A549 (cell line): ENCODE measurements at regions of chr2 and their contacts with region 1.

Region 1: DNA sequence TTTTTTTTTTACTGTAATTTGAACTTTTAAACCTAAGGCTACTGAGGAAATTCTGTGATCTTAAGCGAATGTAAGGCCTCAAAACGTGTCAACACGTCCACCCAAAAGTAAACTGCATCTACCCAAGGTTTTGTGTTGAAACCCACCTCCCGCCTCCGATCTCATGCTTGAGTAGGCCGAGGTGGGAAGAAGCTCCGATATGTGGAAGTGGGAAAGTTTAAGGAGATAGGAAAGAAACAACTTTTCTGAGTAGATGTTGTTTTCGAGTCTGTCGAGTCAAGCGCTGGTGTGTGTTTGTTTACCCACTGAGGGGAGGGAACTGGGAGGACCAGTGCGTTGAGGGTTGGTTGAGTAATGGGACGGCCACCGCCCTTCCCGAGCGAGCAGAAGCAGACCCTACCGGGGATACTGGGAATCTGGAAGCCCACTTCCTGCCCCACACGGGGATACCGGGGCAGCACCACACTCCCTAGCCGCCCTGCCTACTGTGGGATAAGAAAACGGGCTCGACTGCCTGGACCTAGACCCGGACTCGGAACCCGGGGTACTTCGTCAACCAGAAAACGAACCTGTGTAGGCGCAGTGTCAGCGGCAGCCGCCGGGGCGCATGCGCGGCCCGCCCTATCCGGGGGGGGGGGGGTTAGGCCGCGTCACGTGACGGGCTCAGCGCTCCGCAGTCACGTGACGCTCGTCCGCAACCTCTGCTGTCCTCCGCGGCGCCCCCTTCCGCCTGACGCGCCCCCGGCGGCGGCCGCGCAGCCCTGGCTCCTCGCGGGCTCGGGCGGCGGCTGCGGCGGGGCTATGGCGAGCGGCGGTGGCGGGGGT is at the start of gene RETREG2:
- DNase-seq: peak; percentile 87 to 94
- ATAC-seq: peak; percentile 83 to 88
- H3K4me3 ChIP-seq: peak within 1 kb of the TSS; percentile 84
- H3K27ac ChIP-seq: peak within 1 kb of the TSS; percentile 83 to 96
- H3K4me1 ChIP-seq: peaks cover 15% of the 10 kb centered on the region
- CTCF ChIP-seq: peak; percentile 54
- EP300 ChIP-seq: no peak
- POLR2A ChIP-seq: peak; percentile 69; the same call in 1 of the 2 replicates
- RAD21 ChIP-seq: no peak
- polyA plus RNA-seq, gene RETREG2: 67.5 and 83.2 TPM in 2 replicates

Region 2: DNA sequence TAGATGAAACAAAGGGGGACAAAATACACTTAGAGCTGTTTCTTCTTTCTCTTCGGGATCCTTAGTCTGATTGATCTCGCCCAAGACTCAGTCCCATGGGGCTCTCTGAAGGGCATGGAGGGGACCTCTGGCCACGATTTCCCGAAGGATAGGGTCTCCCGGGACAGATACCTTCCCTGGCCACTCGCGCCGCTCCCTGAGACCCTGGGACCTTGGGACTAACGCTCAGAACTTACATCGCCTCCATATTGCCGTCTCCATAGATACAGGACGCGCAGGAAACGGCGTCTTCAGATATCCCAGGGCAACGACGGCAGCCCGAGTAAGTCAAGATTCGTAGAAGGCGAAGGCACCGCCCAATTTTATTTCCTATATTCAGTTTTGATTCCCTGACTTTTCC is 136.5 kb before region 1 on chr2 and contains the start of gene CFAP65:
- CTCF ChIA-PET with region 1: no interaction called
- POLR2A ChIA-PET with region 1: no interaction called
- DNase-seq: peak; percentile 53 to 68
- ATAC-seq: peak; percentile 75 to 85
- H3K4me3 ChIP-seq: peak within 1 kb of the TSS; percentile 49
- H3K27ac ChIP-seq: no peak within 1 kb of the TSS
- H3K4me1 ChIP-seq: peaks cover 3% of the 10 kb centered on the region; the same call in 1 of the 3 replicates
- CTCF ChIP-seq: no peak
- EP300 ChIP-seq: no peak
- POLR2A ChIP-seq: no peak
- RAD21 ChIP-seq: no peak
- polyA plus RNA-seq, gene CFAP65: 0.09 and 0.12 TPM in 2 replicates

Region 3: GRCh38 chr2:219142329-219142728 is 35.4 kb before region 1 on chr2:
- CTCF ChIA-PET with region 1: no interaction called
- POLR2A ChIA-PET with region 1: no interaction called
- DNase-seq: no peak
- ATAC-seq: peak; percentile 68 to 70; a peak in 4 of 6 replicates
- H3K4me3 ChIP-seq: no peak overlapping the region
- H3K27ac ChIP-seq: no peak overlapping the region
- H3K4me1 ChIP-seq: peaks cover 5% of the 10 kb centered on the region; the same call in 1 of the 3 replicates
- CTCF ChIP-seq: no peak
- EP300 ChIP-seq: no peak
- POLR2A ChIP-seq: no peak
- RAD21 ChIP-seq: no peak

Region 4: DNA sequence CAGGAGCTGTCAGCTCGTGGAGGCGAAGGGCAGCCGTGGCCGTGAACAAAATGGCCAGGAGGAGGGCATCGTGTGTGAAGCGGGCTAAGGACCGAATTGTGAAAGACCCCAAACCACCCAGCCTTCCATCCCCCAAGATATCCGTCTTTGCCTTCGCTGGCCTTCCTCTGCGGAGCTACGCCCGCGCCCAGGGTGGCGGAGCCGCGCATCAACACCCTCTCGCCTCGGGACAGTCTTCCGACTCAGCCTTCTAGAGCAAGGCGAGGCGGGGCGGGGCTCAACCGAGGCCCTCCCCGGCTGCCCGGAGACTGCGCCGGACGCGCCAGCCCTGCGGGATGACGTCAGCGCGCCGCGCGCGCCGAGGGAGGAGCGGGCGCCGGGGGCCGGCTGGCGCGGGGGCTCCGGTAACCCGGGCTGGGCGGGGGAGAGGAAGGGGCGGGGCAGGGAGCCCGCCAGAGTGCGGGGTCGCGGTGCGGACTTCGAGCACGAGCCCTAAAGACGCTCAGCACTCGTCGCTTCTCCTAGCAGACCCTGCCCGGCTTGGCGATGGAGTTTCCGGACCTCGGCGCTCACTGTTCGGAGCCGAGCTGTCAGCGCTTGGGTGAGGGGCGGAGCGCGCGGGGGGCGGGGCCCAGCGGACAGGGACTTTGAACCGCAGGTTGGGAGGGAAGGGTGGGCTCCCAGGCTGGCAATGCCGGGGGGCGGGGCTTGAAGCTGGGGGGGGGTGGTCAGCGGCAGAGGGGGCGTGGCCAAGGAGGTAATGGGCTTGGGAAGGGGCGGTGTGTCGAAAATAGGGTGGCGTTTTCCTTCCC is 28.9 kb after region 1 on chr2 and contains the start of gene ZFAND2B:
- CTCF ChIA-PET with region 1: interaction called, 6 read pairs
- POLR2A ChIA-PET with region 1: interaction called, 12 read pairs
- DNase-seq: peak; percentile 89 to 91
- ATAC-seq: peak; percentile 85 to 93
- H3K4me3 ChIP-seq: peak within 1 kb of the TSS; percentile 53
- H3K27ac ChIP-seq: peak within 1 kb of the TSS; percentile 95 to 98
- H3K4me1 ChIP-seq: peaks cover 16% of the 10 kb centered on the region
- CTCF ChIP-seq: no peak
- EP300 ChIP-seq: no peak
- POLR2A ChIP-seq: peak; percentile 96
- RAD21 ChIP-seq: no peak
- polyA plus RNA-seq, gene ZFAND2B: 29.1 and 30.3 TPM in 2 replicates

Region 5: DNA sequence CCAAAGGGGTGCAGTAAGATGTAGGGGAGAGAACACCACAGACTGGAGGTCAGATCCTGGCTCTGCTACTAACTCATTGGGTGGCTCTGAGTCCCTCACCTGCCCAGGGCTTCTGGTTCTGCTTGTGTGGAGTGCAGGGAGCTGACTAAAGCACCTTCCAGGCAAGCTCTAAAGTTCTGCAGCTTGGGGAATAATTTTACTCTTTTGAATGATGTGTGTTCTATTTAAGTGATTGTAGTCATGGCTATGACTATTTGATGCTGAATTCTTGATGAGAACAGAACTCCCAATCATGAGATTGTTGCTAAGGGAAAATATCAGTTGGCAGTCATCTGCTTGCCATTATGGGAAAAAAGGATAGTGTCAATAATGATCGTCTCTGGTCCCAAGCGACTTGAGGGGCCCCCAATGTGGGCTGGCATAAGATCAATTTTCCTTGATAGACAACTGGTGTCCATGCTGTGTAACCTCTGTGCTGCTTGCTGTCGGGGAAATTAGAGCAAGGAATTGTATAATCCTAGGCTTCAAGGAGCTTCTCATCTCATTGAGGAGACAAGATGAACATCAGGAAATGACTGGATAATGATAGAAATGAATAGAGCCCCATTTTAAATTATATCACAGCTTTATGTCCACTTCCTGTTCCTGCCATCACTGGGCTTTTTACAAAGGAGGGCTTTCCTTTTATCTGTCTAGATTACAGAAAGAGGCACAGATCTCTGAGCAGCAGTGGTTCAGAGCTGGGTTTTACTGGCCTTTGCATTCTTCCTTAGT is 581.3 kb after region 1 on chr2:
- CTCF ChIA-PET with region 1: no interaction called
- POLR2A ChIA-PET with region 1: no interaction called
- DNase-seq: no peak
- ATAC-seq: no peak
- H3K4me3 ChIP-seq: no peak overlapping the region
- H3K27ac ChIP-seq: no peak overlapping the region
- H3K4me1 ChIP-seq: no peaks in the 10 kb centered on the region
- CTCF ChIP-seq: no peak
- EP300 ChIP-seq: no peak
- POLR2A ChIP-seq: no peak
- RAD21 ChIP-seq: no peak